ENCODE measurements at regions of chr1 and their contacts with region 1.

Region 1: GRCh38 chr1:11719313-11720032 is 16.5 kb upstream of the AGTRAP start:
- DNase-seq: peak; percentile 73 to 89 (median 82)
- ATAC-seq: peak; percentile 92
- H3K4me3 ChIP-seq: peak overlapping the region; percentile 66
- H3K4me3 Mint-ChIP-seq: peak overlapping the region; percentile 71 to 89 (median 86)
- H3K27ac ChIP-seq: peak overlapping the region; percentile 62
- H3K27ac Mint-ChIP-seq: peak overlapping the region; percentile 73 to 97 (median 93)
- H3K4me1 ChIP-seq: peaks cover 0 to 5% of the 10 kb centered on the region in 2 donors
- H3K4me1 Mint-ChIP-seq: peaks cover 8 to 21% (median 15%) of the 10 kb centered on the region in 7 donors
- H3K27me3 ChIP-seq: no peaks in the 10 kb centered on the region
- H3K27me3 Mint-ChIP-seq: peaks cover 0 to 10% (median 0%) of the 10 kb centered on the region in 5 donors

Region 2: DNA sequence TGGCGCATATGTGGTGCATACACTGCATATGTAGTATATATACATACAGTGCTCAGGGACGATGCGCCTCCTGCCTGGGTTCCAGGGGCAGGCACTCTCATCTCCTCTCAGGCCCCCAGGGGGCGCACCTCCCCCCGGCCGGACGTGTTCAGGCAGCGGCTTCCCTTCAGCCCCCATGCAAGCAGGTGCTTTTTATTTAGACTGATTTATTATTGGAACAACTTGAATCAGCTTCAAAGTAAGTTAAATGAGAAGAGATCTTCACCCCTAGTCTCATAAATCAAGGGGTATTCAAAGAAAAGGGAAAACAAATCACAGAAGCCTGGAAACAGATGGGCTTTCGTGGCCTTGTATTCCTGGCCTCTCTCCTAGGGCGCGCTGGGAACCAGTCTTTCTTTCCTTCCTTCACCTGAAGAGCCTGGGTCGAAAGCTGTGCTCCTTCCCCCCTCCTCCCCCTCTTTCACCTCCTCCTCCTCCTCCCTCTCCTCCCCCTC is 381.8 kb before region 1 on chr1:
- CTCF ChIA-PET with region 1: no interaction called
- POLR2A ChIA-PET with region 1: no interaction called
- intact Hi-C with region 1: loop called (anchors 1 to 10 kb)
- DNase-seq: peak; percentile 46 to 80 (median 68)
- ATAC-seq: peak; percentile 63
- H3K4me3 ChIP-seq: no peak overlapping the region
- H3K4me3 Mint-ChIP-seq: peak overlapping the region in 3 of 10 donors; percentile 9 to 39 (median 36)
- H3K27ac ChIP-seq: no peak overlapping the region
- H3K27ac Mint-ChIP-seq: no peak overlapping the region
- H3K4me1 ChIP-seq: peaks cover 0 to 5% of the 10 kb centered on the region in 2 donors
- H3K4me1 Mint-ChIP-seq: peaks cover 3 to 27% (median 20%) of the 10 kb centered on the region in 7 donors
- H3K27me3 ChIP-seq: no peaks in the 10 kb centered on the region
- H3K27me3 Mint-ChIP-seq: peaks cover 0 to 38% (median 10%) of the 10 kb centered on the region in 5 donors

Region 3: DNA sequence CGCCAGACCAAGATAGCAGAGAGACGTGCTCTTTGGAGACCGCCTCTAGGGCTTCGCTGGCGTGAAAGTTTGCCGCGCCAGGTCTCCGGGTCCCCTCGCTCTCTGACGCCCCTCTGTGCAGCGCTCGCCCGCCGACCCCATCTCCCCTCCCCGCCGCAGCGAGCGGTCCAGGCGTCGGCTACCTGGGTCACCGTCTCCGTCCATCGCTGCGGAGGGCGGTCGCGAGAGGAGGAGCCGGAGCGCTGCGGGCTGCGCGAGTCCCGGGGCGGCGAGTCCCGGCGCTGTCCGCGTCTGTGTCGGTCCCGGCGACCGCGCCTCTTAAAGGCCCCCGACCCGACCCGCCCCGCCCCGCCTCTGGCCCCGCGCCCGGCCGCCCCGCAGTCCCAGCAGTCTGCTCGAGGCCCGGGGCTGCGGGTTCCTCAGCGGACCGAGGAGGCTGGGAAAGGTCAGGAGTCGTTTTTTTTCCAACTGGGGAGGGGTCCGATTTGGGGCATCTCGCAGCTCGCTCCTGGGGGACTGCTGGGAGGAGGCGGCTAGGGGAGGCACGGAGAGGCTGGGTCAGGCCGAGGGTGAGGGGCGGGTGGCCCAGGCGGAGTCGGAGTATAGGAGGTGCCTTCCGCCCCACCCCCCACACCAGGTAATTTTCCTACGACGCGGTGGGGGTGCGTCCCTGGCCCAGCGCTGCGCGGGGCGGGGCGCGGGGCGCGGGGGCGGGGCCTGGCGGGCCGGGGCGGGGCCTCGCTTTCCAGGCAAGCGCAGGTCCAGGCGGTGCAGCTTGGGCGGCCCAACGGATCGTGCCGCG is 65.1 kb before region 1 on chr1 and contains the starts of genes FBXO2 and FBXO44:
- CTCF ChIA-PET with region 1: interaction called, 18 read pairs
- POLR2A ChIA-PET with region 1: interaction called, 28 read pairs
- intact Hi-C with region 1: loop called (anchors 1 kb)
- DNase-seq: peak; percentile 40 to 75 (median 63)
- ATAC-seq: peak; percentile 86
- H3K4me3 ChIP-seq: peak within 1 kb of the TSS; percentile 53
- H3K4me3 Mint-ChIP-seq: peak within 1 kb of the TSS; percentile 72 to 87 (median 78)
- H3K27ac ChIP-seq: peak within 1 kb of the TSS; percentile 71
- H3K27ac Mint-ChIP-seq: peak within 1 kb of the TSS in 5 of 9 donors; percentile 38 to 88 (median 67)
- H3K4me1 ChIP-seq: peaks cover 16 to 31% of the 10 kb centered on the region in 2 donors
- H3K4me1 Mint-ChIP-seq: peaks cover 19 to 48% (median 33%) of the 10 kb centered on the region in 7 donors
- H3K27me3 ChIP-seq: no peaks in the 10 kb centered on the region
- H3K27me3 Mint-ChIP-seq: peaks cover 0 to 17% (median 0%) of the 10 kb centered on the region in 5 donors
- total RNA-seq, gene FBXO2: 0.97 to 4.1 (median 3.7) TPM
- total RNA-seq, gene FBXO44: 35.2 to 67.1 (median 44.8) TPM

Region 4: GRCh38 chr1:11661103-11661502 is 58.4 kb before region 1 on chr1:
- CTCF ChIA-PET with region 1: interaction called, 49 read pairs
- POLR2A ChIA-PET with region 1: interaction called, 30 read pairs
- intact Hi-C with region 1: loop called (anchors 1 kb)
- DNase-seq: no peak
- ATAC-seq: no peak
- H3K4me3 ChIP-seq: no peak overlapping the region
- H3K4me3 Mint-ChIP-seq: no peak overlapping the region
- H3K27ac ChIP-seq: no peak overlapping the region
- H3K27ac Mint-ChIP-seq: peak overlapping the region in 1 of 9 donors; percentile 75
- H3K4me1 ChIP-seq: peaks cover 0 to 5% of the 10 kb centered on the region in 2 donors
- H3K4me1 Mint-ChIP-seq: peaks cover 0 to 12% (median 6%) of the 10 kb centered on the region in 7 donors
- H3K27me3 ChIP-seq: no peaks in the 10 kb centered on the region
- H3K27me3 Mint-ChIP-seq: no peaks in the 10 kb centered on the region

Region 5: GRCh38 chr1:11730429-11730891 is 11.0 kb after region 1 on chr1:
- CTCF ChIA-PET with region 1: interaction called, 13 read pairs
- POLR2A ChIA-PET with region 1: interaction called, 37 read pairs
- intact Hi-C with region 1: loop called in 1 of 2 experiments (anchors 1 kb)
- DNase-seq: peak in 7 of 9 donors; percentile 47 to 63 (median 56)
- ATAC-seq: peak; percentile 91
- H3K4me3 ChIP-seq: peak overlapping the region; percentile 48
- H3K4me3 Mint-ChIP-seq: peak overlapping the region; percentile 81 to 97 (median 91)
- H3K27ac ChIP-seq: peak overlapping the region; percentile 62
- H3K27ac Mint-ChIP-seq: peak overlapping the region; percentile 75 to 97 (median 92)
- H3K4me1 ChIP-seq: peaks cover 25 to 40% of the 10 kb centered on the region in 2 donors
- H3K4me1 Mint-ChIP-seq: peaks cover 30 to 64% (median 51%) of the 10 kb centered on the region in 7 donors
- H3K27me3 ChIP-seq: no peaks in the 10 kb centered on the region
- H3K27me3 Mint-ChIP-seq: no peaks in the 10 kb centered on the region

Region 6: DNA sequence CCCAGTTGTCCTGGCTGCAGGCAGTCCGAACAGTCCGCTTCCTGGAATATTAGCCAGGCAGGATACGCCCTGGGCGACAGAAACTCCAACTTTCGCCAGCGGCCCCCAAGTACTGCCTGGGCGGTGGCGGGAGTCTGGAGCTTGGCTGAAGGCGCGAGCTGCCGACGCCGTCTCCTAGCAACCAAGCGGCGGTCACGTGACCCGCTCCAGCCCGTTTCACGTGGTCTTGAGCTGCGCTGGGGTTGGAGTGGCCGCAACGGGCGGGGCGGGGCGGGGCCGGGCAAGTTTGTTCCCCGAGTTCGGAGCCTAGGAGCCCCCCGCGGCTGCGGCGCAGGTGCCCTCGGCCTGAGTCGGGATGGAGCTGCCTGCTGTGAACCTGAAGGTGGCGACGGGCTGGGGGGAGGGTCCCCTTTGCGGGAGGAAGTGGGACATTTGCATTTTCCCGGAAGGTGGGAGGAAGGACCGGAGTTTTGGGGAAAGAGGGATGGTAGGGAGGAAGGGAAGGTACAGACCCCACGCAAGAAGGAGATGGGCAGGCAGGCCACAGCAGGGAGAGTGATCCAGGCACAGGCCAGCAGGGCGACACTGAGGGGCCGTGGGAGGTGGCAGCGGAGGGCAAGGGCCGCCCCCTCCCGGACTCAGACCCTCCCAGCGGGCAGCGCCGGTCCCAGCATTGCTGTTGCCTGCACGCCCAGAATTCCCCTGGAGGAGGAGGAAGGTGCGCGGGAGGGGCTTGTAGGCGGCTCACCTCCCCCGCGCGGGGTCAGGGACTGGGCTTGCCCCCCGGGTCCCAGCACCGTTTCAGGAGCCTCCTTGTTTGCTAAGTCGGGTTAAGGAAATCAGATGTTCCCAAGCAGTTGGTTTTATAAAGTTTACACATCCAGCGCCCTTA is 16.6 kb after region 1 on chr1 and contains the start of gene AGTRAP:
- CTCF ChIA-PET with region 1: interaction called, 13 read pairs
- POLR2A ChIA-PET with region 1: interaction called, 37 read pairs
- intact Hi-C with region 1: loop called in 1 of 2 experiments (anchors 1 kb)
- DNase-seq: peak; percentile 62 to 84 (median 71)
- ATAC-seq: peak; percentile 78
- H3K4me3 ChIP-seq: peak within 1 kb of the TSS; percentile 92
- H3K4me3 Mint-ChIP-seq: peak within 1 kb of the TSS; percentile 84 to 96 (median 92)
- H3K27ac ChIP-seq: peak within 1 kb of the TSS; percentile 79
- H3K27ac Mint-ChIP-seq: peak within 1 kb of the TSS; percentile 3 to 95 (median 83)
- H3K4me1 ChIP-seq: peaks cover 38 to 52% of the 10 kb centered on the region in 2 donors
- H3K4me1 Mint-ChIP-seq: peaks cover 51 to 80% (median 76%) of the 10 kb centered on the region in 7 donors
- H3K27me3 ChIP-seq: no peaks in the 10 kb centered on the region
- H3K27me3 Mint-ChIP-seq: no peaks in the 10 kb centered on the region
- total RNA-seq, gene AGTRAP: 28.2 to 82.5 (median 32.7) TPM

Region 7: GRCh38 chr1:11749203-11749689 is 29.8 kb after region 1 on chr1:
- CTCF ChIA-PET with region 1: interaction called, 3 read pairs
- POLR2A ChIA-PET with region 1: no interaction called
- intact Hi-C with region 1: loop called in 1 of 2 experiments (anchors 1 kb)
- DNase-seq: peak in 6 of 9 donors; percentile 43 to 67 (median 57)
- ATAC-seq: peak; percentile 76
- H3K4me3 ChIP-seq: no peak overlapping the region
- H3K4me3 Mint-ChIP-seq: peak overlapping the region in 3 of 10 donors; percentile 26 to 58 (median 41)
- H3K27ac ChIP-seq: peak overlapping the region; percentile 14
- H3K27ac Mint-ChIP-seq: peak overlapping the region in 7 of 9 donors; percentile 35 to 78 (median 59)
- H3K4me1 ChIP-seq: peaks cover 0 to 6% of the 10 kb centered on the region in 2 donors
- H3K4me1 Mint-ChIP-seq: peaks cover 13 to 39% (median 20%) of the 10 kb centered on the region in 7 donors
- H3K27me3 ChIP-seq: no peaks in the 10 kb centered on the region
- H3K27me3 Mint-ChIP-seq: no peaks in the 10 kb centered on the region

Region 8: DNA sequence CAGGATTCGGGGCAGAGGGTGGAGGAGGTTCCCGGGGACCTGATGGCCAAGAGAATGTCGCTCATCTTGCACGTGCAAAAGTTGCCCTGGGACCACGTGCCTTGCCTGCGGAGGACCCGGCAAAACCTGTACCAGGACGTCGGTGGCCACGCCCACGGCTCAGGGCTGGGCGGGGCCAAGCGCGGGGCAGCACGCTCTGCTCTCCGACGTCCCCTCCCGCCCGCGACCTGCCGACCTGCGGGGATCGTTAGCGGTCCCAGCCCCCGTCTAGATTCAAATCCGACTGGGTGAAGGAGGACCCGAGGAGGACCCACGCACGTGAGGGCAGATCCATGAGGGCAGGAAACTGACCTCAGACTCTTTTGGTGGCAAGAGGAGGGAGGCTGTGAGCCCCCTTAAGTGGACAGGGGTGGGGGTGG is 42.5 kb after region 1 on chr1 and contains the start of gene C1orf167:
- CTCF ChIA-PET with region 1: no interaction called
- POLR2A ChIA-PET with region 1: no interaction called
- intact Hi-C with region 1: no loop called
- DNase-seq: peak in 5 of 9 donors; percentile 13 to 54 (median 22)
- ATAC-seq: peak; percentile 66
- H3K4me3 ChIP-seq: no peak within 1 kb of the TSS
- H3K4me3 Mint-ChIP-seq: peak within 1 kb of the TSS in 7 of 10 donors; percentile 3 to 55 (median 42)
- H3K27ac ChIP-seq: no peak within 1 kb of the TSS
- H3K27ac Mint-ChIP-seq: no peak within 1 kb of the TSS
- H3K4me1 ChIP-seq: peaks cover 0 to 5% of the 10 kb centered on the region in 2 donors
- H3K4me1 Mint-ChIP-seq: peaks cover 2 to 12% (median 5%) of the 10 kb centered on the region in 7 donors
- H3K27me3 ChIP-seq: peaks cover 0 to 5% of the 10 kb centered on the region in 2 donors
- H3K27me3 Mint-ChIP-seq: peaks cover 13 to 35% (median 17%) of the 10 kb centered on the region in 5 donors
- total RNA-seq, gene C1orf167: 0.13 TPM in 1 of 5 experiments, not detected in the others

Region 9: DNA sequence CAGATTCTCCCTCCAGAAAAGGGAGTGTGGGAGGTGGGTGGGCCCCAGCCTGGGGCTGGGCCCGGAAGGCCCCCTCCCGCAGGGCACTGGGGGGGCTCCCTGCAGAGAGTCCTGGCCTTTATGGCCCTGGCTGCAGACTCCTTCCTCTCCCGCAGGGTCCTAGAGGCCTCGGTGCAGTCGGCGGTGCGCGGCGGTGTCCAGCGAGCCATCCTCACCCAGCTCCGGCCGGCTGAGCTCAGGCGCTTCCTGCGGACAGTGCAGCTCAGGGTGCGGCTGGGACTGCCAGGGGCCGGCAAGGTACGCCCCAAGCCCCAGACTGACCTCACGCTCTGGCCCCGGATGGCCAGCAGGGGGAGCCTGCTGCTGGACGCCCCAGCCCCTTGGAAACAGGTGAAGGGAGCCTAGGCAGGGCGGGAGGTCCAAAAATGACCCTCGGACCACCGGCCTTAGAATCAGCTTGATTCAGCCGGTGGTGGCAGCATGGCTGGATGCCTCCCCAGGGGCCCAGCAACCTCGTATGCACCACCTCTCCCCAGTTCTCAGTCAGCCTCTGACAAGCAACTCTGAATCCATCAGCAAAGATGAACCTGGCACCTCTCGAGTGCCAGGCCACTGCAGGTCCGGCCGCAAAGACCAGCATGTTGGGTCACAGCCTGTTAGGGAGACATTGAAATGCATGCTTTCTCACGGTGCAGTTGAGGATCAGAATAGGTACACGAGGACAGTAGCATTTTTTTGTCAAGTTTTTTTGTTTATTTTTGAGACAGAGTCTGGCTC is 65.7 kb after region 1 on chr1:
- CTCF ChIA-PET with region 1: no interaction called
- POLR2A ChIA-PET with region 1: no interaction called
- intact Hi-C with region 1: no loop called
- DNase-seq: peak in 7 of 9 donors; percentile 11 to 60 (median 17)
- ATAC-seq: peak; percentile 81
- H3K4me3 ChIP-seq: peak overlapping the region; percentile 37
- H3K4me3 Mint-ChIP-seq: peak overlapping the region in 8 of 10 donors; percentile 29 to 70 (median 57)
- H3K27ac ChIP-seq: no peak overlapping the region
- H3K27ac Mint-ChIP-seq: peak overlapping the region in 3 of 9 donors; percentile 11 to 49 (median 31)
- H3K4me1 ChIP-seq: peaks cover 4 to 11% of the 10 kb centered on the region in 2 donors
- H3K4me1 Mint-ChIP-seq: peaks cover 4 to 9% (median 6%) of the 10 kb centered on the region in 7 donors
- H3K27me3 ChIP-seq: no peaks in the 10 kb centered on the region
- H3K27me3 Mint-ChIP-seq: no peaks in the 10 kb centered on the region

Measured in naive thymus-derived CD4-positive, alpha-beta T cell (primary cell).